ENCODE measurements at regions of chr19 and their contacts with region 1.

Region 1: DNA sequence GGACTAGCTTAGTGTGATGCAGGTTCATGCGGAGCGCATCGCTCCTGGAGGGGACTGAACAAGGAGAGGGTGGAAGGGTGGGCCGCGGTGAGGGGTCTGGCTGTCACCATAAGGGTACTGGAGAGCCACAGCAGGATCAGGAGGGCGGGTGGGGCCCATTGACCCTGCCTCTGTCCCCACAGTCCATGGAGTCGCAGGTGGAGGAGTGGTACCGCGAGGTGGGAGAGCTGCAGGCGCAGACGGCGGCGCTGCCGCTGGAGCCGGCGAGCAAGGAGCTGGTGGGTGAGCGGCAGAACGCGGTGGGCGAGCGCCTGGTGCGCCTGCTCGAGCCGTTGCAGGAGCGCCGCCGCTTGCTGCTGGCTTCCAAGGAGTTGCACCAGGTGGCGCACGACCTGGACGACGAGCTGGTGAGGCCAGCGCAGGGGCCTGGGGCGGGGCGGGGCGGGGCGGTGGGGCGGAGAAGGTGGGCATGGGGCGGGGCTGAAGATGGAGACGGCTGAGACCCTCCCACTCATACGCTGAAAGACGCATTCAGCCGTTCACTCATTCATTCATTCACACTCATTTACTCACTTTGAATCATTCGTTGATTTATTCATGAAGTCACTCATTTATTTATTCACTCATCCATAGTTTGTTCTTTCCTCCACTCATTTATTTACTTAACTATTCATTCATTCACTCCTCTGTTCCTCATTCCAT is 27.5 kb upstream of the SHKBP1 start:
- DNase-seq: no peak
- H3K4me3 ChIP-seq: no peak overlapping the region
- H3K27me3 ChIP-seq: peaks cover 9% of the 10 kb centered on the region
- CTCF ChIP-seq: peak; percentile 50; the same call in 1 of the 2 replicates

Region 2: DNA sequence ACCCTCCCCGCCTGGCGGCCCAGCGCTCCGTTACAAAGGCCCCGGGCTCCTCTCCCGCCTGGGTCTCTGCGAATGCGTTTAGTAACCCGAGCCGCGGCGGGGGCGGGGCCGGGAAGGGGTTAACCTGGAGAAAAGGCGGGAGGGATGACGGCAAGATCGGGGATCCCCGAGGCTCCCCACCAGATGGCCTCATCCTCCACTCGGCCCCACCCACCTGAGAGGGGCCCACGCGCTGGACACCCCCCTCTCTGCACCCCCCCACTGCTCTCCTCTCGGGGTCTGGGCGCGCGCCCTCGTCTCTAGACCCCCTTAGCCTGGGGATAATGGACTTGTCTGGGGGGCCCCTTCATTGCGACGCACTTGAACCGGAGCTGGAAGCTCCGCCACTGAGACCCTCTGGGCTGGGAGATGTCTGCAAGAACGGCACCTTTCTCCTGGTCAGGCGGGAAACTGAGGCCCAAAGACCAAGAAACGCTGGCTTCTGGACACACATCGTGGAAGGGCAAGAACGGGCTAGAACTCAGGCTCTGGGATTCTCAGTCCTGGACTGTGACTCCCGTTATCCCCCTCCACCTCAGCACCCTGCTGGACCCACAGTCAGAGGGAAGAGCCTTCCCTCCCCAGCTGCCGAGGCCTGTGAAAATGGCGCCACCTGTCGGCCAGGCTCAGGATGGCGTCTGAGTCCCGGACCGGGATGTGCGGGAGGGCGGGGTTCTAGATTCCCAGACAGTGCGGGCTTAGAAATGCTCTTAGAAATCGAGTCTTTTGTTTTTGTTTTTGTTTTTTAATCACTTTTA is 49.2 kb after region 1 on chr19:
- CTCF ChIA-PET with region 1: interaction called, 82 read pairs
- POLR2A ChIA-PET with region 1: no interaction called
- DNase-seq: no peak
- H3K4me3 ChIP-seq: peak overlapping the region; percentile 37
- H3K27me3 ChIP-seq: 0 out of 2 replicates have a peak, but pooled peaks cover 2% of the 10 kb centered on the region
- CTCF ChIP-seq: peak; percentile 99

Region 3: GRCh38 chr19:40603389-40604135 is 54.4 kb after region 1 on chr19:
- CTCF ChIA-PET with region 1: interaction called, 82 read pairs
- POLR2A ChIA-PET with region 1: no interaction called
- DNase-seq: peak; percentile 85
- H3K4me3 ChIP-seq: peak overlapping the region; percentile 44
- H3K27me3 ChIP-seq: 0 out of 2 replicates have a peak, but pooled peaks cover 2% of the 10 kb centered on the region
- CTCF ChIP-seq: peak; percentile 20; the same call in 1 of the 2 replicates

Region 4: GRCh38 chr19:40640744-40641143 is 91.6 kb after region 1 on chr19:
- CTCF ChIA-PET with region 1: interaction called, 41 read pairs
- POLR2A ChIA-PET with region 1: no interaction called
- DNase-seq: no peak
- H3K4me3 ChIP-seq: no peak overlapping the region
- H3K27me3 ChIP-seq: no peaks in the 10 kb centered on the region
- CTCF ChIP-seq: no peak

Measured in BJ (cell line).